Gastrocnemius medialis (tissue), 4 donors: ENCODE measurements at regions of chr2 and their contacts with region 1.

Region 1: DNA sequence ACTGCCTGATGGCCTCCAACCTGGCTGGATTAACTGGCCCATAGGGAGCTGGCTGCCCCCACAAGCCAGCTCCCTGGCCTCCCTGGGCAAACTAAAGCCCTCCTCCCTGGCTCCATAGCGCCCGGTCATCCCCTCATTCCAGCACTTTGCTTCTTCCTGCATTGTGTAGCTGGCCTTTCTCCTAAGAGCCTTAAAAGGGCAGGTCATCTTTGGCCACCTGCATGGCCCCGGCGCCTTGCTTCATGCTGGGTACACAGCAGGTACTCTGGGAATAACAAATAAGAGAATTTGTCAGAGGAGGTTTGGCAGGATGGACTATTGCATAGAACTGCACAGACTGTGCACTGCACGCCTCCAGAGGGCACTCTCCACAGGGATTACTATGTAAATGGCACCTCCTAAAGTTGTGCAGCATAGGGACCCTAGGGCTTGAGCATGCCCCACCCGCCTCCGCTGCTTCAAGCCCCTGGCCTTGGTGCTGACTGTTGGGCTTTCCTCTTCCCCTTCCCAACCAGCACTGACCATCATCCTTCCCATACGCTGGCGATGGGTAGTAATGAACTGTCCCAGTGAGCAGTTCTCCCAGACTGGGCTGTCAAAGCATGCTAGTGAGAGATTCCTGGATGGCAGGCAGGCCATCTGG is 10.9 kb downstream of the STEAP3 start:
- DNase-seq: peak in 1 of 2 donors; percentile 31
- ATAC-seq: peak; percentile 13 to 37
- H3K4me3 ChIP-seq: no peak overlapping the region
- H3K27ac ChIP-seq: peak overlapping the region; percentile 84 to 87 (median 85)
- H3K4me1 ChIP-seq: peaks cover 78 to 79% of the 10 kb centered on the region in 2 donors
- H3K27me3 ChIP-seq: no peaks in the 10 kb centered on the region
- CTCF ChIP-seq: peak in 2 of 5 experiments; percentile 9 to 41
- POLR2A ChIP-seq: no peak

Region 2: GRCh38 chr2:118112771-118113334 is 1121.6 kb before region 1 on chr2:
- in situ Hi-C with region 1: no loop called
- intact Hi-C with region 1: no loop called
- DNase-seq: no peak
- ATAC-seq: no peak
- H3K4me3 ChIP-seq: no peak overlapping the region
- H3K27ac ChIP-seq: no peak overlapping the region
- H3K4me1 ChIP-seq: no peaks in the 10 kb centered on the region
- H3K27me3 ChIP-seq: no peaks in the 10 kb centered on the region
- CTCF ChIP-seq: no peak
- POLR2A ChIP-seq: no peak

Region 3: DNA sequence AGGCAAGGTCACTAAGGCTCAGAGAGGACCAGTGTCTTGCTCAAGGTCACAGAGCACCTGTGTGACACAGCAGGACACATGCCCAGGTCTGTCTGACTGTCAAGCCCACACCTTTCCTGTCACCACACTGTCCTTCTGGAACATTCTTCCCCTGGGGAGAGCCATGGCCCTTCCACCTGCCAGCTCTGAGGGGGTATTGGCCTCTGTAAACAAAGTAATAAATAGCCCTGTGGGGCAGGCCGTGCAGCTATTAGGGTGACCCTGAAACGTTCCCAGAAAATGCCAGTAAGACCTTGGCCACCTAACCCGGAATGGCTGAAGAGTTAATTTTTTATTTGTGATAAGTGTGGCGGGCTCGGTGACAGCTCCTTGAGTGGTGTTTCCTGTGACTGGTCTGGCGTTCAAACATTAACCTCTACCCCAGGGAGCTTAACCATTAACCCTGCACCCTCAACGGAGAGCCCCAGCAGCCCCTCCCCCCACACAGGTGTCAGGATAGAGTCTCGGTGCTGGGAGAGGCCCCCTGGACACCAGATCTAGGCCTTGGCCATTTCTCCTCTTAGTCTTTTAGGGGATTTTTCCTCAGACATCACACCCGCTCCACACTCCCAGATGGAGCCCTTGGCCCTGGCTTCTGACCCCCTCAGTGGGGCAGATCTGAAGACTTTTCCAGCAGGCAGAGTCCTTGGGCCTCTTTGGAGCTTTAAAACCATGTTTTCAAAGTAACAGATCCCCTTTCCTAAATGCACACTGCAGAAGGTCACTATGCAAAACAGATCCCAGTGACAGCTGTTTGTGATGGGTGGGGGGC is 253.1 kb after region 1 on chr2:
- in situ Hi-C with region 1: no loop called
- intact Hi-C with region 1: loop called (anchors 10 kb)
- DNase-seq: no peak
- ATAC-seq: no peak
- H3K4me3 ChIP-seq: no peak overlapping the region
- H3K27ac ChIP-seq: peak overlapping the region in 3 of 4 donors; percentile 72 to 88 (median 82)
- H3K4me1 ChIP-seq: peaks cover 44 to 77% of the 10 kb centered on the region in 2 donors
- H3K27me3 ChIP-seq: no peaks in the 10 kb centered on the region
- CTCF ChIP-seq: no peak
- POLR2A ChIP-seq: no peak